Left ventricle myocardium inferior (tissue), 1 donor: ENCODE measurements at regions of chr12 and their contacts with region 1.

Region 1: GRCh38 chr12:21891751-21892217 is 49.4 kb downstream of the ABCC9 start:
- DNase-seq: peak; percentile 60
- H3K4me3 ChIP-seq: peak overlapping the region; percentile 28
- H3K27ac ChIP-seq: peak overlapping the region; percentile 81
- H3K4me1 ChIP-seq: peaks cover 77% of the 10 kb centered on the region
- H3K27me3 ChIP-seq: no peaks in the 10 kb centered on the region
- CTCF ChIP-seq: no peak

Region 2: GRCh38 chr12:21501379-21501956 is 390.3 kb before region 1 on chr12 and contains the starts of genes GOLT1B and RECQL:
- intact Hi-C with region 1: loop called (anchors 5 kb)
- DNase-seq: peak; percentile 91
- H3K4me3 ChIP-seq: peak within 1 kb of the TSS; percentile 94
- H3K27ac ChIP-seq: peak within 1 kb of the TSS; percentile 87
- H3K4me1 ChIP-seq: peaks cover 76% of the 10 kb centered on the region
- H3K27me3 ChIP-seq: no peaks in the 10 kb centered on the region
- CTCF ChIP-seq: no peak
- total RNA-seq, gene GOLT1B: 17.5 TPM
- total RNA-seq, gene RECQL: 23.1 TPM